Activated naive CD4-positive, alpha-beta T cell treated with anti-CD3 and anti-CD28 coated beads, Interleukin-2, amount 10 ng/mL, durations not matched to agents 7 days and 5 days (primary cell): ENCODE measurements at regions of chr12 and their contacts with region 1.

Region 1: DNA sequence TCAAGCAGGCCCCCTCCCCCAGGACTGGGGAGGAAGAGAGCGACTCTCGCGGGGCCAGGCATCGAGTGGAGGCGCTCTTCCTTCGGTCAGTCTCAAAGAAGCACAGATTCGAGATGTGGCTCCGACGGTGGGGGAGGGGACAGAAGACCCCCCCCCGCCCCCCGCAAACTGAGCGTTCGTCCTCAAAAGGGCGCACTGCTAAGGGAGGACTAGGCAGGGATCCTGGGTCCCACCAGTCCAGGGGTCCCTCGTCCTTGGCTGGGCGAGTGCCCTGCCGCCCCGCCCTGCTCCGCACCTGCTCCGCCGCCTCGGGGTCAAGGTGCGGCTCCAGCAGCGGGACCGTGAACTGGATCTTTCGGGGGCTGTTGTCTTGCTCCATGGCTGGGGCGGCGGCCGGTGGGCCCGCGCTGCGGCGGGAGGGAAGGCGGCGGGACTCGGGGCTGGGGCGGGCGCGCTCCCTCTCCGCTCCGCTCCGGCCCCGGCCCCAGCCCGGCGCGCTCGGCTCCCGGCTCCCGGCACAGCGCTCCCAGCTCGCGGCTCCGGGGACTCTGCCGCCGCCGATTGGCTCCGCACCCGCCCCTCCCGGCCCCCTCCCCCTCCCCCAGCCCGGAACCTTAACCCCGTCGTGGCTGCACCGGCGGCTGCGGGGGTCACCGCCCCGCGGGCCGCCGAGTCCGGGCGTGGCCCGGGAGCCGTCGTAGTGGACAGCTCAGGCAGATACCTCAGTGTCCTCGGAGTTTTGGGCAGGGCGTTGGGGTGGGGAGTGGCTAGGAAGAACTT is at the start of gene PPP1R1A:
- DNase-seq: no peak
- H3K4me3 Mint-ChIP-seq: peak within 1 kb of the TSS; percentile 22
- H3K27ac Mint-ChIP-seq: no peak within 1 kb of the TSS
- H3K4me1 Mint-ChIP-seq: peaks cover 10% of the 10 kb centered on the region
- H3K27me3 Mint-ChIP-seq: peaks cover 95% of the 10 kb centered on the region

Region 2: GRCh38 chr12:54601841-54602240 is 13.5 kb after region 1 on chr12:
- CTCF ChIA-PET with region 1: interaction called, 39 read pairs
- DNase-seq: no peak
- H3K4me3 Mint-ChIP-seq: no peak overlapping the region
- H3K27ac Mint-ChIP-seq: no peak overlapping the region
- H3K4me1 Mint-ChIP-seq: peaks cover 6% of the 10 kb centered on the region
- H3K27me3 Mint-ChIP-seq: peaks cover 29% of the 10 kb centered on the region

Region 3: GRCh38 chr12:54616933-54617680 is 28.8 kb after region 1 on chr12:
- CTCF ChIA-PET with region 1: no interaction called
- DNase-seq: no peak
- H3K4me3 Mint-ChIP-seq: no peak overlapping the region
- H3K27ac Mint-ChIP-seq: no peak overlapping the region
- H3K4me1 Mint-ChIP-seq: no peaks in the 10 kb centered on the region
- H3K27me3 Mint-ChIP-seq: peaks cover 47% of the 10 kb centered on the region

Region 4: GRCh38 chr12:54795644-54796043 is 207.3 kb after region 1 on chr12:
- CTCF ChIA-PET with region 1: no interaction called
- DNase-seq: no peak
- H3K4me3 Mint-ChIP-seq: no peak overlapping the region
- H3K27ac Mint-ChIP-seq: no peak overlapping the region
- H3K4me1 Mint-ChIP-seq: no peaks in the 10 kb centered on the region
- H3K27me3 Mint-ChIP-seq: no peaks in the 10 kb centered on the region